Ovary (tissue), 10 donors: ENCODE measurements at regions of chr2 and their contacts with region 1.

Region 1: DNA sequence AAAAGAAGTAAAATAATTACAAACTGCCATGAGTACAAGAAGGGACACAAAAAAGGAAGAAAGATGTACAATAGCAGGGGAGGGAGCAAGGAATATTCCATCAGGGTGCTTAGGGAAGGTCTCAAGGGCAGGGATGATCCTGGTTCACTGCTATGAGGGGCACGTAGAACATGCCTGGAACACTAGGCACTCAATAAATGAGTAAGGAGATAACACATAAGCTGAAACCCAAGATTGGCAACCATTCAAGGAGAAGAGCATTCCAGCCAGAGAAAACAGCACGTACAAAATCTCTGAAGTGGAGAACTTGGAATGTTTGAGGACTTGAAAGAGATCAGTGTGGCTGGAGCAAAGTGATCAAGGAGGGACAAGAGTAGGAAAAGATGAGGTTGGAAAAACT is 103.2 kb downstream of the FAM161A start:
- DNase-seq: no peak
- H3K4me3 ChIP-seq: no peak overlapping the region
- H3K27ac ChIP-seq: no peak overlapping the region
- H3K4me1 ChIP-seq: peaks cover 4% of the 10 kb centered on the region
- H3K27me3 ChIP-seq: no peaks in the 10 kb centered on the region
- CTCF ChIP-seq: no peak
- EP300 ChIP-seq: no peak
- POLR2A ChIP-seq: no peak

Region 2: DNA sequence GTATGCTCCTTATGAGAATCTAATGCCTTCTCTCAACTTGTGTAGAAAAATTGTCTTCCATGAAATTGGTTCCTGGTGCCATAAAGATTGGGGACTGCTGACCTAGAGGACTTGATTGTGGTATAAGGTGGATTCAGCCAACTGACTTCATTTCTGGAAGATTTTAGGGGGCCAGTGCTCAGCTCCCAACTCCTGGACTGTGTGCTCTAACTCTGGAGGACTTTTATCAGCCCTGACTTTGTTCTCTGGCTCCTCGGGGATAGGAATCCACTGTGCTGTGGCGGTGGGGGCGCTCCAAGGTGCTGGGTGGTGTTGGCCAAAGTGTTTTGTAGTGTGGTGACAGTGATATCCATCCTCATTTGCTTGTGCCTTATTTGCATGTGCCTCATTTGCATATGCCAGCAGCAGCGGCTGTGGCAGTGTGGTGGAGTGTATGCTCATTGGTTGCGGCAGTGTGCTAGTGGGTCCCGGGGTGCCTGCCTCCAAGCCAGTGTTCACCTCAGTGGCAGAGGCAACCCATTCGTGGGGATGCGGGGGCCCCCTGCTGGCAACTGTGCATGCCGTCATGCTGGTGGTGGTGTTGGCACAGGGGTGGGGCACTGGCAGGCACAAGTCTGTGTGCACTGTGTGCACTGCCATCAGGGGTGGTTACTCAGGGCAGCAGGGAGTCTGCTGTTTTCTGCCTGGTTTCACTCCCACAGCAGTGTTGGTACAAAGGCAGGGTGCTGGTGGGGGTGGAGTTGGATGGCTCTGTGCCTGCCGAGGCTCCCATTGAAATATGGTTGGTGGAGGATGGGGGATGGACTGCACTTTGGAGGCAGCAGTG is 974.5 kb after region 1 on chr2:
- intact Hi-C with region 1: loop called in 1 of 4 experiments (anchors 5 kb)
- DNase-seq: peak in 2 of 5 donors; percentile 20 to 24
- H3K4me3 ChIP-seq: no peak overlapping the region
- H3K27ac ChIP-seq: no peak overlapping the region
- H3K4me1 ChIP-seq: peaks cover 9% of the 10 kb centered on the region
- H3K27me3 ChIP-seq: no peaks in the 10 kb centered on the region
- CTCF ChIP-seq: no peak
- EP300 ChIP-seq: no peak
- POLR2A ChIP-seq: no peak